Heart right ventricle (tissue), 16 donors: ENCODE measurements at regions of chr3 and their contacts with region 1.

Region 1: DNA sequence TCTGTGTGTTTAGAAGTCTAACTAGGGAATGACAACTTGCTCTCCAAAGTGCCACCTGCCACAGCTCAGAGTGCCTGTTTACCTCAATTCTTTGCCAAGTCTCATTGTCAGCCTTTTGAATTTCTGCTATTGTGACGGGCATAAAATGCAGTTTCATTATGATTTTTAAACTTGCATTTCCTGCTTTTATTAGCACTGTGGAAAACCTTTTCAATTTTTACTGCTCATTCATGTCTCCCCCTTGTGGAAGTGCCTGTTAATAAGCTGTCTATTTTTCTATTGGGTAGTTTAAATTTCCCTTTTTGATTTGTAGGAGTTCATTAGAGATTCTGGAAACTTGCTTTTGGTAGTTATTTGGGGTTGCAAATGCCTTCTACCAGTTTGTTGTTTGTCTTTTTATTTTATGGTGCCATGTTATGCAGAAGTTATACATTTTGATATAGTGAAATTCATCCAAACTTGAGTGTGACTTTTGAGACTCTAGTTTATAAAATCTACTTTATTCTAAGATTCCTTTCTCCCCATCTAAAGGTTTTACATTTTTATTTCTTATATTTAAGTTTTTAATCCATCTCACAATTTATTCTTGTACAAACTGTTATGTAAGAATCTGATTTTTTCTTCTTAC is 53.9 kb upstream of the FRMD4B start:
- DNase-seq: peak in 1 of 2 donors; percentile 13
- ATAC-seq: peak in 5 of 8 donors; percentile 11 to 49 (median 39)
- H3K4me3 ChIP-seq: peak overlapping the region in 4 of 10 donors; percentile 12 to 33 (median 20)
- H3K27ac ChIP-seq: peak overlapping the region in 1 of 10 donors; percentile 54
- H3K4me1 ChIP-seq: peaks cover 0 to 22% (median 0%) of the 10 kb centered on the region in 9 donors
- H3K27me3 ChIP-seq: no peaks in the 10 kb centered on the region
- CTCF ChIP-seq: peak in 8 of 9 donors; percentile 39 to 73 (median 68)

Region 2: GRCh38 chr3:69474186-69474585 is 34.4 kb after region 1 on chr3:
- intact Hi-C with region 1: no loop called
- DNase-seq: no peak
- ATAC-seq: peak in 1 of 8 donors; percentile 47
- H3K4me3 ChIP-seq: no peak overlapping the region
- H3K27ac ChIP-seq: no peak overlapping the region
- H3K4me1 ChIP-seq: peaks cover 0 to 8% (median 0%) of the 10 kb centered on the region in 9 donors
- H3K27me3 ChIP-seq: no peaks in the 10 kb centered on the region
- CTCF ChIP-seq: no peak

Region 3: GRCh38 chr3:69510481-69511030 is 70.8 kb after region 1 on chr3:
- intact Hi-C with region 1: loop called in 1 of 10 experiments (anchors 10 kb)
- DNase-seq: no peak
- ATAC-seq: peak in 6 of 8 donors; percentile 47 to 84 (median 64)
- H3K4me3 ChIP-seq: no peak overlapping the region
- H3K27ac ChIP-seq: peak overlapping the region in 9 of 10 donors; percentile 7 to 70 (median 47)
- H3K4me1 ChIP-seq: peaks cover 0 to 32% (median 8%) of the 10 kb centered on the region in 9 donors
- H3K27me3 ChIP-seq: no peaks in the 10 kb centered on the region
- CTCF ChIP-seq: no peak

Region 4: DNA sequence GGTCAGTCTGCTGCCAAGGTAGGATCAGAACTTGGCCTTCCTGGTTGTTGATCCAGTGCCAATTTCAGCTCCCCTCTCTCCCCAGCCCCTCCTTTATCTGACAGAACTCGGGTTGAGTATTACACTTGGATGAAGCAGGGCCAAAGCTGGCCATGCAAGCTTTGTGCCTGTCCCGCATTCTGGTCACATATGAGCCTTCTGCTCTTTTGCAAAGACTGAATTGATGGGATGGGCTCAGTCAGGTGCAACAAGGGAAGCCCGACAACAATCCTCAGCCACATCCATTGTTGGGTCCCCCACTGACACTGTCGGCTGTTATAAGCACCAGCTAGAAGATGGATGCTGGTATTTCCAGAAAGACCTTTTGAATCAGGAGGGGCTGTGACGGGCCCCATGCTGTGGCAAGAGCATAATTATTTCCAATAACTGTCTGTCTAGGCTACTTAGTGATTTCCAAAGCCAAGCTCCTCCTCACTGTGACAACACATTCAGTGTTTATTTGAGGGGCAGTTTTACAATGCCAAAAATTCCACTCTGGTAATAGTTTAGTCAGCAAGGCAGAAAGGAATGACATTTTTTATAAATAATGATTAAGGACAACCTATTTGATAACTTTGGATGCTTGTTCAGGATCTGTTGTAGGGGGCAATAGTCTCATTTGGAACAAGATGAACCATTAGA is 92.9 kb after region 1 on chr3:
- intact Hi-C with region 1: loop called in 1 of 10 experiments (anchors 10 kb)
- DNase-seq: no peak
- ATAC-seq: peak in 4 of 8 donors; percentile 28 to 44 (median 33)
- H3K4me3 ChIP-seq: no peak overlapping the region
- H3K27ac ChIP-seq: peak overlapping the region in 1 of 10 donors; percentile 15
- H3K4me1 ChIP-seq: peaks cover 0 to 22% (median 8%) of the 10 kb centered on the region in 9 donors
- H3K27me3 ChIP-seq: no peaks in the 10 kb centered on the region
- CTCF ChIP-seq: no peak

Region 5: DNA sequence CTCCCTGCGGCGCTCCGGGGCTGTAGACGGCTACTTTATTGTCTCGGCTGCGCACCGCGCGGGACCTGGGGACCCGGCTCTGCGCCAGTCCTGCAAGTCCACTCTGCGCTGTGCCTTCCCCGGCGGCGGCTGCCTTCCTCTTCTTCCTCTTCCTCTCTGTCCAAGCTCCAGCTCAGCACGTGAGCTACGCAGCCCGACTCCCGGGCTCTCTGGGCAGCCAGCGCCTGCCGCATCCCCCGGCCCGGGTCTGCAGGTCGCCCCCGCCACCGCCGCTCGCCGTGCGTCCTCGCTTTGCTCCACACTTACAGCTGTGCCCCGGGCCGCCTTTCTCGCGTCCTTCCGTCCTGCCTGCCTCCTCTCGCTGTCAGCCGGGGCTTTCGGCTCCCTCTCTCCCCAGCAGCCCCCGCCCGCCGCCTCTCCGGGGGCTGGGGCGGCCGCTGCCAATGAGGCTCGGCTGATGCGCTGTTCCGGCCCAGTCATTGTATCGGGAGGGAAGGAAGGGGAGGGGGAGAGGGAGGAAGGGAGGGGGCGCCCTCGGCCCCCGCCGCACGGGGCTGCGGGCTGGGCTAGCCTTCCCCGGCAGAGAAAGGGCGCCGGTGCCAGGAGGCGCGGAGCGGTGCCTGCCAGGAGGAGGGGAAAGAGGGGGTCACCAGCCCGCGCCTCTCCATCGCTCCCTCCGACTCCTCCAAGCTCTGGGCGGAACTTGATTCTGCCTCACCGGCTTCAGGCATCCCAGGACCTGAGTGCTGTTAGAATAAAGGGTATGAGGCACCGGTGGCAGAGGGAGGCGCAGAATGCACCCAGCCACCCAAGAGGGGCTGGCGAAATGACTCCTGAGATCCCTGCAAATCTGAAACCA is 102.7 kb after region 1 on chr3:
- intact Hi-C with region 1: loop called in 3 of 10 experiments (anchors 10 kb)
- DNase-seq: peak in 1 of 2 donors; percentile 35
- ATAC-seq: peak; percentile 47 to 87 (median 68)
- H3K4me3 ChIP-seq: peak overlapping the region; percentile 41 to 81 (median 67)
- H3K27ac ChIP-seq: peak overlapping the region in 8 of 10 donors; percentile 2 to 72 (median 54)
- H3K4me1 ChIP-seq: peaks cover 0 to 35% (median 14%) of the 10 kb centered on the region in 9 donors
- H3K27me3 ChIP-seq: peaks cover 0 to 35% (median 13%) of the 10 kb centered on the region in 7 donors
- CTCF ChIP-seq: no peak